CD14-positive monocyte (primary cell): ENCODE measurements at regions of chr2 and their contacts with region 1.

Region 1: GRCh38 chr2:44479122-44479887 is 117.6 kb downstream of the CAMKMT start:
- DNase-seq: peak; percentile 44 to 69 (median 64)
- H3K4me3 ChIP-seq: no peak overlapping the region
- H3K4me3 Mint-ChIP-seq: no peak overlapping the region
- H3K27ac ChIP-seq: no peak overlapping the region
- H3K27ac Mint-ChIP-seq: no peak overlapping the region
- H3K4me1 ChIP-seq: no peaks in the 10 kb centered on the region
- H3K4me1 Mint-ChIP-seq: no peaks in the 10 kb centered on the region
- H3K27me3 ChIP-seq: no peaks in the 10 kb centered on the region
- H3K27me3 Mint-ChIP-seq: no peaks in the 10 kb centered on the region
- CTCF ChIP-seq: peak; percentile 98

Region 2: DNA sequence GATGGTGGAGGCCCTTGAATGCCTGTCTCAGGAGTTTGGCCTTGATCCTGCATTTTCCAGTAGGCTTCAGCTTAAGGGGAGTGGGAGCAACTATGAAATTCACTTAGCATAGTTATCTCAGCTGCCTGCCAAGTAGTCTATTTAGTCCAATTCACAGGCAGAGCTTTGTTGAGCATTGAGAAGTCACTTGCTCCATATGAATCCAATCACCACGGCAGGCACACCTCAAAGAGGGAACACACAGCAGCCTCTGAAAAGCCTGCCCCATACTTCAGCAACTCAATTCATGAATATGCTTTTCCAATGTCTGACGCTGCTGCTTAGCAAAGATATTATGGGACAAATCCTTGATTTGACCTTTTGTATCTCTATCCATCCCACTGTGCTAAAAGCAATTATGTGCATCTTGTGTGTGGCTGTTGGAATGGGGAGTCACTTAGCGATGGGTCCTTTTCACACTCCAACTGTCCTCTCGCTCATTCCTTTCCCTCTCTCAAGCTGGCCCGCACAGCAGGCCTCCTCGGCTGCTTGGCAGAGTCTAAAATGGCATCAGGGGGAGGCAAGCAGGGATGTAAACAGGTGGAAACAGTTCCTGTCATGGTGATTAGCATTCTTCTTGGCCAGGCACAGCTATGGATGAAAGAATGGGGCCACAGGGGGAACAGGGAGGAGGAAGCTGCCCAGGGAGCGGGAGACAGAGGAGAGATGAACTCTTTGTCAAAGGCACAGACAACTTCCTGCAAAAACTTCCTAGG is 427.5 kb before region 1 on chr2:
- intact Hi-C with region 1: no loop called
- DNase-seq: no peak
- H3K4me3 ChIP-seq: no peak overlapping the region
- H3K4me3 Mint-ChIP-seq: no peak overlapping the region
- H3K27ac ChIP-seq: no peak overlapping the region
- H3K27ac Mint-ChIP-seq: no peak overlapping the region
- H3K4me1 ChIP-seq: no peaks in the 10 kb centered on the region
- H3K4me1 Mint-ChIP-seq: no peaks in the 10 kb centered on the region
- H3K27me3 ChIP-seq: no peaks in the 10 kb centered on the region
- H3K27me3 Mint-ChIP-seq: peaks cover 4 to 6% (median 5%) of the 10 kb centered on the region in 3 donors
- CTCF ChIP-seq: no peak

Region 3: GRCh38 chr2:44515416-44515815 is 36.1 kb after region 1 on chr2:
- intact Hi-C with region 1: no loop called
- DNase-seq: no peak
- H3K4me3 ChIP-seq: no peak overlapping the region
- H3K4me3 Mint-ChIP-seq: no peak overlapping the region
- H3K27ac ChIP-seq: no peak overlapping the region
- H3K27ac Mint-ChIP-seq: peak overlapping the region in 1 of 7 donors; percentile 4
- H3K4me1 ChIP-seq: no peaks in the 10 kb centered on the region
- H3K4me1 Mint-ChIP-seq: no peaks in the 10 kb centered on the region
- H3K27me3 ChIP-seq: no peaks in the 10 kb centered on the region
- H3K27me3 Mint-ChIP-seq: peaks cover 0 to 3% (median 2%) of the 10 kb centered on the region in 3 donors
- CTCF ChIP-seq: no peak

Region 4: DNA sequence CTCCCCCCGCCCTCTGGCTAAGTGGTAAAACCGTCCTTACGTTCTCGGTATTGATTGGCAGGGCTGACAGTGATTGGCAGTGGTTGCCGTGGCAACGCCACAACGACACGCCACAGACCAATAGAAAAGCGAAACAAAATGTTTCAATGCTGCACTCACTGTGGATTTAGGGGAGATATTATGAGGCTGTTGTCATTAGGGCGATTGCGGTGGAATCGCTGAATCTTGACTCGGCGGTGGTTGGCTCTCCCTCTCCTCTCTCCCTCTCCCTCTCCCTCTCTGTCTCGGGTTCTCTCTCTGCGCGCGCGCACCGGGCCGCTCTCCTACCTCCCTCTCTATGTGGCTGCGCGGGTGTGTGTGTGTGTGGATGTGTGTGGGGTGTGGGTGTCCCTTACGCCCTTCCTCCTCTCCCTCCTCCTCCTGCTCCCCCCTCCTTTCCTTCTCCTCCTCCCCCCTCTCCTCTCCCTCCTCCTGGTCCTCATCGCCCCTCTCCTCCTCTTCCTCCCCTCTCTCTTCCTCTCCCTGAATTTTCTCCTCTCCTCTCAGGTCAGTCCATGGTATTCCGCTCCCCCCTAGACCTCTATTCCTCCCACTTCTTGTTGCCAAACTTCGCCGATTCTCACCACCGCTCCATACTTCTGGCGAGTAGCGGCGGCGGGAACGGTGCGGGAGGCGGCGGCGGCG is 462.4 kb after region 1 on chr2 and contains the start of gene SIX3:
- intact Hi-C with region 1: loop called in 1 of 2 experiments (anchors 5 kb)
- DNase-seq: no peak
- H3K4me3 ChIP-seq: peak within 1 kb of the TSS in 1 of 3 experiments; percentile 55
- H3K4me3 Mint-ChIP-seq: peak within 1 kb of the TSS; percentile 69 to 93
- H3K27ac ChIP-seq: no peak within 1 kb of the TSS
- H3K27ac Mint-ChIP-seq: no peak within 1 kb of the TSS
- H3K4me1 ChIP-seq: peaks cover 11 to 23% of the 10 kb centered on the region in 2 donors
- H3K4me1 Mint-ChIP-seq: peaks cover 39% of the 10 kb centered on the region
- H3K27me3 ChIP-seq: peaks cover 83 to 98% of the 10 kb centered on the region in 2 donors
- H3K27me3 Mint-ChIP-seq: peaks cover 87 to 100% (median 94%) of the 10 kb centered on the region in 3 donors
- CTCF ChIP-seq: no peak
- polyA plus RNA-seq, gene SIX3: not detected